HepG2 (cell line): ENCODE measurements at regions of chr14 and their contacts with region 1.

Region 1: DNA sequence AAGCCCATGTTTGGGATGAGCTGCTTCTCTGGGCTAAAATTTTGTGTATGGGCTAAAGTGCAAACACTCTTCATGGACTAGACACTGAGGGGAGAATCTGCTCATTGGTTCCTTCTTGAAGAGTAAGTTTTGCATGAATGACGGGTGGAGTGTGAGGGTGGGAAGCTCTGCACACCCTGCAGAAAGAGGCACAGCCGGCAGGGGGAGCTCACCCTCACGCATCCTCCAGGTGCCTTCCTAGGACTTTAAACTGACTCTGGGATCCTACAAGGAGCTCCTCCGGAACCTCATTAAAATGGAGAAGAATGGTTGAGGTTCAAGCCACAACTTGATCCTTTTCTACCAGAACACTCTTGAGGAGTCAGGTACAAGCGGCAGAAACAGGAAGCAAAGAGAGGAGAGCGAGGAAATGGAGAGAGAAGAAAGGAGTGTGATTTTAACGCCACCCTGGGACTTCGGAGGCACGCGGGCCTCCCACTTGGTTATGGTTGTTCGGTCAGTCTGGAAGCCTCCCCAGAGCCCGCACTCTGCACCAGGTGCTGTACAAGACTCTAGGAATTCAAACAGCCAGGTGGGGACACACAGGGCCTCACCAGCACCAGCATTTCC is 87.5 kb downstream of the SETD3 start:
- DNase-seq: peak; percentile 23
- ATAC-seq: peak; percentile 80
- H3K4me3 ChIP-seq: no peak overlapping the region
- H3K27ac ChIP-seq: no peak overlapping the region
- H3K4me1 ChIP-seq: no peaks in the 10 kb centered on the region
- H3K27me3 ChIP-seq: no peaks in the 10 kb centered on the region
- CTCF ChIP-seq: peak; percentile 78
- EP300 ChIP-seq: no peak
- POLR2A ChIP-seq: no peak
- RAD21 ChIP-seq: no peak

Region 2: GRCh38 chr14:99415496-99416281 is 22.5 kb after region 1 on chr14:
- CTCF ChIA-PET with region 1: interaction called, 21 read pairs
- POLR2A ChIA-PET with region 1: no interaction called
- in situ Hi-C with region 1: no loop called
- intact Hi-C with region 1: loop called (anchors 1 kb)
- DNase-seq: peak; percentile 82
- ATAC-seq: peak; percentile 90
- H3K4me3 ChIP-seq: no peak overlapping the region
- H3K27ac ChIP-seq: no peak overlapping the region
- H3K4me1 ChIP-seq: peaks cover 4% of the 10 kb centered on the region; the same call in 1 of the 2 replicates
- H3K27me3 ChIP-seq: no peaks in the 10 kb centered on the region
- CTCF ChIP-seq: peak; percentile 84
- EP300 ChIP-seq: no peak
- POLR2A ChIP-seq: no peak
- RAD21 ChIP-seq: peak; percentile 77

Region 3: DNA sequence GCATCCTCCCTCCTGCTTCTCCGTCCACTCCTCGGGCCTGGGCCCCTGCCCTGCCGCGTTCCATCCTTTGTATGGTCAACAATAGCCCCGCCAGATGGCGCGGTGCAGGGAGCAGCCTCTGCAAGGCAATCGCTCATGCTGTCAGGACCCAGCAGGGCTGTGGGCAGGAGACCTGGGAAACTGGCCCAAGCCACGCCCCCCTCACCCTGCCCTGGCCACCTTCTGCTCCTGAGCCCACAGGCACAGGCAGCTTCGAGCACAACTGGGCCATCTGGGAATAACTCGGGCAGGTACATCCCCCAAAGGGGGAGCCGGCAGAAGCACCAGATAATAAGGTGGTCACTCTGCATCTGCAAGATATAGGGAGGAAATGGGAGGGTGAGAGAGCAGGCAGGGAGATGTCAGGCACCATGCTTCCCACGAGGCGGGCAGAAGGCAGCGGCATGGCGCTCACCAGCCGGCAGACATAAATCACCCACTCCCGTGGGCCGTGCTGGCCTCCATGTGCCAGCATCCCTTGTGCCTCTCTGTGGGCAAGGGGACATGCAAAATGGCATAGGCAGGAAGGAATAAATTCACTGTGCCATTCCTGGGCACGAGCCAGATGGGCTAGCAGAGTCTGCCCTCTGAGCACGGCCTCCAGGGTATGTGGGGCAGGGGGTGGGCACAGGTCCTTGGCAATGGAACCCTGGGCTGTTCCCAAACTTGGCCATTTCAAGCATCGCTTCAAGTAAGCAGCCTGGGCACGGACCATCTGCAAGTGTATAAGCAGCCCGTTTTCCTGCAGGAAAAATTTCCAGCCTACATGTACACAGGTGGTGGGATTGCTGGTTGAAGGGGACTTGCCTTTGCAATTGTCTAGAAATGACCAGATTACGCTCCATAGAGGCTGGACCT is 170.3 kb after region 1 on chr14:
- CTCF ChIA-PET with region 1: no interaction called
- POLR2A ChIA-PET with region 1: no interaction called
- in situ Hi-C with region 1: no loop called
- intact Hi-C with region 1: no loop called
- DNase-seq: peak; percentile 84
- ATAC-seq: peak; percentile 82
- H3K4me3 ChIP-seq: no peak overlapping the region
- H3K27ac ChIP-seq: peak overlapping the region; percentile 91
- H3K4me1 ChIP-seq: peaks cover 92% of the 10 kb centered on the region
- H3K27me3 ChIP-seq: no peaks in the 10 kb centered on the region
- CTCF ChIP-seq: peak; percentile 94
- EP300 ChIP-seq: no peak
- POLR2A ChIP-seq: no peak
- RAD21 ChIP-seq: peak; percentile 96